ENCODE measurements at regions of chr4 and their contacts with region 1.

Region 1: DNA sequence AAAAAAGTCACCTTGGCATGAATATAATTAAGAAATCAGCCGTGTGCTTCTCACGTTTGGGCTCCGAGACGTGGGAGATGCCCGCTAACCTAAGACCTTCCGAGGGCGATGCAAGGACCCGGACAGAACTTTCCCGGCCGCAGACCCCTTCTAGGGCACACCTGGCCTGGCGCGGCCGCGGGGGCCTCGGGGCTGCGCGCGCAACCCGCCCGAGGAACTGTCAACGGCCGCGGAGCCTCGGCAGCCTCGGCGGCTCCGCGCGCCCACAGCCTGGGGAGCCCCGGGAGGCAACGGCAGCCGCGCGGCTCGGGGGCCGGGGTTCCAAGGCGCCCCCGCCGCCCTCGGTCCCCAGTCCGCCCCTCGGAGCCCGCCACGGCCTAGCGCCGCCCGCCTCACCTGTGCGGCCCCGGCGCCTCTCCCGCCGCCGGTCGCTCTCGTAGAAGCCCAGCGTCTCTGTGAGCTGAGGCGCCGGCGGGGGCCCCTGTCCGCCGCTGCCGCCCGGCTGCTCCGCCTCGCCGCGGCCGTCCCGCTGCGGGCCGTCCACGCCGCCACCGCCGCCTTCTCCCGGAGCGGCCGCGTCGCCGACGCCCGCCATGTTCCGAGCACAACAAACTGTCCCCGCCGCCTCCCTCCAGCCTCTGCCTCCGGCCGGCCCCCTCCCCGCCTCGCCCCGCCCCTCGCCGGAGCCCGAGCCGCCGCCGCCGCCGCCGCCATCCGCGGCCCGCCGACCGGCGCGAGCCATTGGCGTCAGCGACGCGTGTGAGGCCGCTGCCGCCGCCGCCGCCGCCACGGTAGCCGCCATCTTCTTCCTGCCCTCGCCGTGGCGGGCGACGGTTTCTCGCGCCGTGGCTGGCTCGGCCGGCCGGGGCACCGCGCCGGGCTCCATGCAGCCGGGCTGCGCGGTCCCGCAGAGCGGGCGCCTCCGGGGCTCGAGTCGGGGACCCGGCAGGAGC is at the start of gene TAPT1:
- DNase-seq: peak; percentile 81 to 84
- ATAC-seq: peak; percentile 73 to 80
- H3K4me3 ChIP-seq: peak within 1 kb of the TSS; percentile 77 to 86 (median 78)
- H3K27ac ChIP-seq: peak within 1 kb of the TSS; percentile 94 to 98 (median 96)
- H3K4me1 ChIP-seq: peaks cover 53 to 55% of the 10 kb centered on the region in 2 donors
- H3K27me3 ChIP-seq: no peaks in the 10 kb centered on the region
- CTCF ChIP-seq: no peak
- POLR2A ChIP-seq: peak; percentile 76 to 80
- total RNA-seq, gene TAPT1: 29.5 to 44.1 (median 40.8) TPM

Region 2: GRCh38 chr4:15649914-15650545 is 576.1 kb before region 1 on chr4:
- in situ Hi-C with region 1: no loop called
- intact Hi-C with region 1: loop called (anchors 5 kb)
- DNase-seq: peak; percentile 18 to 55
- ATAC-seq: peak; percentile 76 to 84
- H3K4me3 ChIP-seq: peak overlapping the region in 1 of 4 donors; percentile 2
- H3K27ac ChIP-seq: peak overlapping the region; percentile 11 to 99 (median 30)
- H3K4me1 ChIP-seq: peaks cover 64 to 68% of the 10 kb centered on the region in 2 donors
- H3K27me3 ChIP-seq: no peaks in the 10 kb centered on the region
- CTCF ChIP-seq: peak; percentile 44 to 78 (median 74)
- POLR2A ChIP-seq: no peak

Region 3: GRCh38 chr4:15778289-15779241 is 447.6 kb before region 1 on chr4 and contains the start of gene CD38:
- in situ Hi-C with region 1: loop called in 1 of 4 experiments (anchors 25 kb)
- intact Hi-C with region 1: loop called (anchors 1 kb)
- DNase-seq: peak; percentile 46 to 64
- ATAC-seq: peak; percentile 76 to 86
- H3K4me3 ChIP-seq: peak within 1 kb of the TSS; percentile 71 to 86 (median 78)
- H3K27ac ChIP-seq: peak within 1 kb of the TSS; percentile 89 to 91 (median 90)
- H3K4me1 ChIP-seq: peaks cover 6 to 27% of the 10 kb centered on the region in 2 donors
- H3K27me3 ChIP-seq: no peaks in the 10 kb centered on the region
- CTCF ChIP-seq: no peak
- POLR2A ChIP-seq: peak in 1 of 2 donors; percentile 6
- total RNA-seq, gene CD38: 0.73 to 9.0 (median 2.4) TPM

Region 4: DNA sequence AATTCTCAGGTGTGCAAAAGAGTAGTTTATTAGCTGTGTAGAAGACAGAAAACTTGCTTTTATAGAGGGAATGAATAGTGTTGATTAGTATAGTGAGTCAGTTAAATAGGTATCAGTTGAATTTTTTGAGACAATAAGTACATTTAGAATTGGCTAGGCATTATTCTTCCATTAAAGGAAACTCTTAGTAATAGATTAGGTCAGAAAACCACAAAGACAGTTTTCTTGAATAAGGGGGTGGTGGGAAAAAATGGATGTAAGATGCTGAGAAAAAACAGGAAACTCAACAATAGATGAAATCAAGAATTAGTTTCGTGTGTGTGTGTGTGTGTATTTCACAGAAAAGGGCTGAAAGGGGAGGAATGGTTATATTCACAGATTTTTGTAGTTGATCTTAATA is 431.2 kb before region 1 on chr4:
- in situ Hi-C with region 1: loop called in 1 of 4 experiments (anchors 25 kb)
- intact Hi-C with region 1: loop called (anchors 5 kb)
- DNase-seq: no peak
- ATAC-seq: no peak
- H3K4me3 ChIP-seq: no peak overlapping the region
- H3K27ac ChIP-seq: no peak overlapping the region
- H3K4me1 ChIP-seq: peaks cover 5 to 24% of the 10 kb centered on the region in 2 donors
- H3K27me3 ChIP-seq: no peaks in the 10 kb centered on the region
- CTCF ChIP-seq: no peak
- POLR2A ChIP-seq: no peak

Region 5: GRCh38 chr4:16116493-16116990 is 109.6 kb before region 1 on chr4:
- in situ Hi-C with region 1: no loop called
- intact Hi-C with region 1: loop called (anchors 10 kb)
- DNase-seq: peak in 1 of 2 donors; percentile 22
- ATAC-seq: peak in 1 of 2 donors; percentile 8
- H3K4me3 ChIP-seq: no peak overlapping the region
- H3K27ac ChIP-seq: peak overlapping the region; percentile 52 to 77 (median 66)
- H3K4me1 ChIP-seq: peaks cover 53% of the 10 kb centered on the region in 2 donors
- H3K27me3 ChIP-seq: no peaks in the 10 kb centered on the region
- CTCF ChIP-seq: no peak
- POLR2A ChIP-seq: no peak

Region 6: GRCh38 chr4:18021722-18022571 is 1795.8 kb after region 1 on chr4 and contains the start of gene LCORL:
- in situ Hi-C with region 1: no loop called
- intact Hi-C with region 1: loop called (anchors 10 kb)
- DNase-seq: peak; percentile 91 to 95
- ATAC-seq: peak; percentile 92
- H3K4me3 ChIP-seq: peak within 1 kb of the TSS; percentile 70 to 84 (median 78)
- H3K27ac ChIP-seq: peak within 1 kb of the TSS; percentile 88 to 97 (median 96)
- H3K4me1 ChIP-seq: peaks cover 13 to 24% of the 10 kb centered on the region in 2 donors
- H3K27me3 ChIP-seq: no peaks in the 10 kb centered on the region
- CTCF ChIP-seq: peak in 2 of 5 experiments; percentile 33 to 38
- POLR2A ChIP-seq: peak; percentile 97
- total RNA-seq, gene LCORL: 12.8 to 34.7 (median 26.1) TPM